ENCODE measurements at regions of chr2 and their contacts with region 1.

Region 1: GRCh38 chr2:191677646-191678436 is at the start of gene NABP1:
- DNase-seq: peak; percentile 97
- H3K4me3 Mint-ChIP-seq: peak within 1 kb of the TSS; percentile 84
- H3K27ac Mint-ChIP-seq: peak within 1 kb of the TSS; percentile 92
- H3K4me1 Mint-ChIP-seq: peaks cover 22% of the 10 kb centered on the region
- H3K27me3 Mint-ChIP-seq: no peaks in the 10 kb centered on the region
- CTCF ChIP-seq: no peak
- total RNA-seq, gene NABP1: 81.8 and 96.3 TPM in 2 replicates

Region 2: GRCh38 chr2:190759749-190760213 is 918.1 kb before region 1 on chr2:
- CTCF ChIA-PET with region 1: no interaction called
- POLR2A ChIA-PET with region 1: no interaction called
- intact Hi-C with region 1: no loop called
- DNase-seq: peak; percentile 82
- H3K4me3 Mint-ChIP-seq: peak overlapping the region; percentile 24
- H3K27ac Mint-ChIP-seq: peak overlapping the region; percentile 77
- H3K4me1 Mint-ChIP-seq: peaks cover 16% of the 10 kb centered on the region
- H3K27me3 Mint-ChIP-seq: no peaks in the 10 kb centered on the region
- CTCF ChIP-seq: no peak

Region 3: GRCh38 chr2:191574232-191574631 is 103.6 kb before region 1 on chr2:
- CTCF ChIA-PET with region 1: interaction called, 9 read pairs
- POLR2A ChIA-PET with region 1: interaction called, 18 read pairs
- intact Hi-C with region 1: no loop called
- DNase-seq: no peak
- H3K4me3 Mint-ChIP-seq: no peak overlapping the region
- H3K27ac Mint-ChIP-seq: peak overlapping the region; percentile 44
- H3K4me1 Mint-ChIP-seq: peaks cover 9% of the 10 kb centered on the region
- H3K27me3 Mint-ChIP-seq: no peaks in the 10 kb centered on the region
- CTCF ChIP-seq: no peak

Region 4: DNA sequence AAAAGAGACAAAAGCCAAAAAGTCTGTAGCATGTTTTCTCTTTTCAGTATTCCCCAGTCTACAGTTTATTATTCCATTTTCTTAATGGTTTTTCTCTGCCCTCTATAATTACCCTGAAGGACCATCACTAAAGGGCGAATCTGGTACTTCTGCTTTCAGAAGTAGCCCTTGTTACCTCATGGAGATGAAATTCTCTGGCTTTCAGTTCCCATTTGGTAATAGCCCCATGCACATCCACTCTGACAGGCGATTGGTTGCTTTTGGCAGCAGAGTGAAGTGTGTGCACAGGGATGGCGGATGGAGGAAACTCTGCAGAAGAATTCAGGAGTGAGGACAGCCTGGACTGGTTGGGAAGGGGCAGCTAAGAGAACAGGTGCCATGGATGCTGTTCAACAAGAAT is 66.2 kb before region 1 on chr2:
- CTCF ChIA-PET with region 1: interaction called, 3 read pairs
- POLR2A ChIA-PET with region 1: interaction called, 7 read pairs
- intact Hi-C with region 1: loop called (anchors 1 kb)
- DNase-seq: no peak
- H3K4me3 Mint-ChIP-seq: no peak overlapping the region
- H3K27ac Mint-ChIP-seq: peak overlapping the region; percentile 3
- H3K4me1 Mint-ChIP-seq: peaks cover 9% of the 10 kb centered on the region
- H3K27me3 Mint-ChIP-seq: no peaks in the 10 kb centered on the region
- CTCF ChIP-seq: no peak

Region 5: GRCh38 chr2:191631754-191632153 is 46.1 kb before region 1 on chr2:
- CTCF ChIA-PET with region 1: interaction called, 3 read pairs
- POLR2A ChIA-PET with region 1: interaction called, 55 read pairs
- intact Hi-C with region 1: no loop called
- DNase-seq: peak; percentile 93
- H3K4me3 Mint-ChIP-seq: no peak overlapping the region
- H3K27ac Mint-ChIP-seq: no peak overlapping the region
- H3K4me1 Mint-ChIP-seq: peaks cover 60% of the 10 kb centered on the region
- H3K27me3 Mint-ChIP-seq: no peaks in the 10 kb centered on the region
- CTCF ChIP-seq: no peak

Region 6: GRCh38 chr2:191656391-191656790 is 21.4 kb before region 1 on chr2:
- CTCF ChIA-PET with region 1: interaction called, 4 read pairs
- POLR2A ChIA-PET with region 1: interaction called, 83 read pairs
- intact Hi-C with region 1: loop called (anchors 1 kb)
- DNase-seq: peak; percentile 94
- H3K4me3 Mint-ChIP-seq: no peak overlapping the region
- H3K27ac Mint-ChIP-seq: peak overlapping the region; percentile 90
- H3K4me1 Mint-ChIP-seq: peaks cover 21% of the 10 kb centered on the region
- H3K27me3 Mint-ChIP-seq: no peaks in the 10 kb centered on the region
- CTCF ChIP-seq: no peak

Region 7: DNA sequence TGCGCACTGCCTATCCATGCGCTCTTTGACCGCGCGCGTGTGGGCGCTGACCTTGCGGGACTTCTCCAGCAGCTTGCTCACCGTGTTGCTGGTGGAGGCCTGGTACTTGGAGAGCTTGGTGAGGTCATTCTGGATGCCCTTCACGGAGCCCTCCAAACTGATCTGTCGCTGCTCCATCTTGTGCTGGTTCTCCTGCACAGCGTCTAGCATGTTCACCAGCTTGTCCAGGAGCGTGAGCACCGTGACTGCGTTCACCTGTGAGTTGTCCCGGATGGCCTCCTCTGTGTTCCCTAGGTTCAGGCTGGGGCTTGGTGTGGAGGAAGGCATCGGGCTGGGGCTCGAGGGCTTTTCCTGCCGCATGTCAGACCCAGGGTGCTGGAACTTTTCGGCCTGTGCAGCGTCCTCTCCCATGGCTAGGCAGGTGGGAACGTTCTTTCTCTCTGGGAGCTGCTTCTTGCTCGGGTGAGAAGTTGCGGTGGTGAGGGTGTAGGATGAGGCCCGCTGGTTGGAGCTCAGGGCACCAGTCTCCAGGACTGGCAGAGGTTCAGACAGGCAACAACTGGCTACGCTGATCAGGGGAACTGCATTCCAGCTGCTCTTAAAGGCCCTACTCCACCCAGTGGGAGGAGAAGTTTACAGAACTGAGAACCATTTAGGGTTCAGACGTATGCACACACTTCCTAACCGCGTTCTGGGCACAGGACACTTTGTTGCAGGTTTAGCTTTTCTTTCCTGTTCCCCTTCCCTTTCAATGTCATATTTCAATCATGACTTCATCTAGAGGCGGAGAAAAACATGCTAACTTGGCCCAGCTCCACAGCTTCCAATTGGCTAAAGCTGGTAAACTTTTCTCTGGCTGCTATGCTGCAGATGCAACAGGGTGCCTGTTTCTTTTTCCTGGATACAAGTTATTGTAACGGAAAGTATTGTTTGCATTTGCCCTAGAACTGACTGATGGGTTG is 169.0 kb after region 1 on chr2 and contains the start of gene CAVIN2:
- CTCF ChIA-PET with region 1: no interaction called
- POLR2A ChIA-PET with region 1: interaction called, 20 read pairs
- intact Hi-C with region 1: no loop called
- DNase-seq: peak; percentile 95
- H3K4me3 Mint-ChIP-seq: peak within 1 kb of the TSS; percentile 90
- H3K27ac Mint-ChIP-seq: peak within 1 kb of the TSS; percentile 86
- H3K4me1 Mint-ChIP-seq: peaks cover 35% of the 10 kb centered on the region
- H3K27me3 Mint-ChIP-seq: no peaks in the 10 kb centered on the region
- CTCF ChIP-seq: no peak
- total RNA-seq, gene CAVIN2: 14.7 and 16.4 TPM in 2 replicates